GM12878 (cell line): ENCODE measurements at regions of chr10 and their contacts with region 1.

Region 1: GRCh38 chr10:59984415-59984814 is 78.1 kb upstream of the CCDC6 start:
- DNase-seq: no peak
- ATAC-seq: no peak
- H3K4me3 ChIP-seq: no peak overlapping the region
- H3K27ac ChIP-seq: no peak overlapping the region
- H3K4me1 ChIP-seq: no peaks in the 10 kb centered on the region
- H3K27me3 ChIP-seq: no peaks in the 10 kb centered on the region
- CTCF ChIP-seq: no peak
- EP300 ChIP-seq: no peak
- POLR2A ChIP-seq: no peak
- RAD21 ChIP-seq: no peak

Region 2: DNA sequence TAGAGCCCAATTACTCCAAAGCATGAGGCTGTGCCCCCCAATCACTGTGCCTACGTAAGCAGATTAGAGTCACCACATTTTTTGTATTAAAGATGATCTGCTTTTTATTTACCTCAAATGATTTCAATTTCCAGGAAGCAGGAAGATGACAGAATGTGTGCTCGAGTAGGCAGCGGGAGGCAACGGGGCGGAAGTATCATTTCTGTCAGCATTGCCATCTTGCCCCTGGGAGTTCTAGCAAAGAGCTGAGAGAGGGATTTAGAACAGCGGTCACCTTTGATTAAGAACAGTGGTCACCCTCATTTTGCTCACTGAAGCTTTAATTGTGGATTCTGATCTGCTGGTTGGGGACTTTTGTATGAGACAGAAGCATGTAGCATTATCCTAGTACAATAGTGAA is 505.0 kb before region 1 on chr10:
- CTCF ChIA-PET with region 1: no interaction called
- POLR2A ChIA-PET with region 1: no interaction called
- RAD21 ChIA-PET with region 1: no interaction called
- SMC1A ChIA-PET with region 1: no interaction called
- in situ Hi-C with region 1: no loop called
- intact Hi-C with region 1: no loop called
- DNase-seq: no peak
- ATAC-seq: no peak
- H3K4me3 ChIP-seq: no peak overlapping the region
- H3K27ac ChIP-seq: no peak overlapping the region
- H3K4me1 ChIP-seq: no peaks in the 10 kb centered on the region
- H3K27me3 ChIP-seq: no peaks in the 10 kb centered on the region
- CTCF ChIP-seq: no peak
- EP300 ChIP-seq: no peak
- POLR2A ChIP-seq: no peak
- RAD21 ChIP-seq: no peak

Region 3: DNA sequence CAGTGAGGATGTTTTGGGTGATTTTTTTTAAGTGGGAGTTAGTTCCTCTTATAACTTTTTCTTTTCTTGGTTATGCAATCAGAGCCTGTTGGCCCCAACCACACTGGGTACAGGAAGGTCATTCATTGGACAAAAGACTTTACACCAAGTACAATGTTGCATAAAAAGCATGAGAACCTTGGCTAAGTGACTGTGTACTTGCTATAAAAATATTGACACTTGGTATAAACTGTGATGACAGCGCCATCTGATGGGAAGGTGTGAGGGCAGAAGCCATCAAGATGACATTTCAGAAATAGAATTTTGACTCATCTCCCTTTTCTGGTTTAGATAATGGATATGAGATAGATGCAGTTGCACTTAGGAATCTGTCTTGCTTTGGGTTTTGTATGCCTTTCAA is 48.3 kb after region 1 on chr10:
- CTCF ChIA-PET with region 1: no interaction called
- POLR2A ChIA-PET with region 1: interaction called, 11 read pairs
- RAD21 ChIA-PET with region 1: no interaction called
- SMC1A ChIA-PET with region 1: no interaction called
- in situ Hi-C with region 1: no loop called
- intact Hi-C with region 1: no loop called
- DNase-seq: peak; percentile 23
- ATAC-seq: peak; percentile 83
- H3K4me3 ChIP-seq: no peak overlapping the region
- H3K27ac ChIP-seq: no peak overlapping the region
- H3K4me1 ChIP-seq: peaks cover 15% of the 10 kb centered on the region
- H3K27me3 ChIP-seq: no peaks in the 10 kb centered on the region; a peak in 1 of 4 replicates
- CTCF ChIP-seq: peak; percentile 56 to 71 (median 68)
- EP300 ChIP-seq: no peak
- POLR2A ChIP-seq: no peak
- RAD21 ChIP-seq: peak; percentile 79

Region 4: GRCh38 chr10:60048091-60048501 is 63.7 kb after region 1 on chr10:
- CTCF ChIA-PET with region 1: no interaction called
- POLR2A ChIA-PET with region 1: no interaction called
- RAD21 ChIA-PET with region 1: no interaction called
- SMC1A ChIA-PET with region 1: no interaction called
- in situ Hi-C with region 1: no loop called
- intact Hi-C with region 1: no loop called
- DNase-seq: no peak
- ATAC-seq: no peak
- H3K4me3 ChIP-seq: no peak overlapping the region
- H3K27ac ChIP-seq: no peak overlapping the region
- H3K4me1 ChIP-seq: no peaks in the 10 kb centered on the region
- H3K27me3 ChIP-seq: no peaks in the 10 kb centered on the region; a peak in 1 of 4 replicates
- CTCF ChIP-seq: peak in 1 of 3 experiments; percentile 16; a peak in 2 of 6 replicates
- EP300 ChIP-seq: no peak
- POLR2A ChIP-seq: no peak
- RAD21 ChIP-seq: 0 out of 2 replicates have a peak, but pooled peaks have one; percentile 4

Region 5: DNA sequence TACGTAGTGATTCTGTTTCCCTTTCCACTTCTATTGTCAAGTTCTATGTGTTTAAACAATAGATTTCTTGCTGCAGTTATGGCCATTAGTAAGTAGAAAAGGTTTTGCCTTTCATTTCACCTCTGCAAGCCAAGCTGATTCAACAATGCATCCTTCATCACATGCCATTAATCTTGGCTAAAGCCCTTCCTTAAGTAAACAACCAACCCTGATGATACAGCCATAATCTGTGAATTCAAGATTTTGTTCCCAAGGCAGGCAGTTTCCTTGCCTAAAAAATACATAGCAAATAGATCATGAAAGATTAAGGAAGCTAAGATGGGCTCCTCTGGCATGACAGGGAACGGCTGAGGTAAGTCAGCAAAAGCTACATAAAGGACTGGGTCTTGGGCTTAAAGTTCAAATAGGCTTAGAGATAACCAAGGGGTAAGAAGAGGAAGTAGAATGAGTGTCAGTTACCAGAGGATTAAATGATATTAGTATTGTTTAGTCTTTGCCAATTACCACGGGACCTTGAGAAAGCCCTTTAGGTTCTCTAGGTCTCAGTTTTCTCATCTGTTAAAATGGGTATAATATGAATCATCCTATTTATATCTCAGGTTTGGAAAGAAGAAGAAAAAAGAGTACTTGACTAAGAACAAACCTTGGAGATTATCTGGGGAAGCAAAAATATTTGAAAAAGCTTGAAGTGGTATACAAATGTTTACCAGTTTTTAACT is 441.1 kb after region 1 on chr10:
- CTCF ChIA-PET with region 1: no interaction called
- POLR2A ChIA-PET with region 1: no interaction called
- RAD21 ChIA-PET with region 1: no interaction called
- SMC1A ChIA-PET with region 1: no interaction called
- in situ Hi-C with region 1: no loop called
- intact Hi-C with region 1: no loop called
- DNase-seq: no peak
- ATAC-seq: peak; percentile 37; the same call in 1 of the 3 replicates
- H3K4me3 ChIP-seq: no peak overlapping the region
- H3K27ac ChIP-seq: no peak overlapping the region
- H3K4me1 ChIP-seq: no peaks in the 10 kb centered on the region
- H3K27me3 ChIP-seq: no peaks in the 10 kb centered on the region
- CTCF ChIP-seq: no peak
- EP300 ChIP-seq: no peak
- POLR2A ChIP-seq: no peak
- RAD21 ChIP-seq: no peak